ENCODE measurements at regions of chr3 and their contacts with region 1.

Region 1: GRCh38 chr3:187955076-187955952 is 198.6 kb upstream of the LPP start:
- DNase-seq: peak in 2 of 3 donors; percentile 64 to 75
- ATAC-seq: peak; percentile 62 to 75 (median 69)
- H3K4me3 ChIP-seq: no peak overlapping the region
- H3K27ac ChIP-seq: peak overlapping the region; percentile 30 to 70 (median 67)
- H3K4me1 ChIP-seq: peaks cover 0 to 56% (median 25%) of the 10 kb centered on the region in 4 donors
- H3K27me3 ChIP-seq: no peaks in the 10 kb centered on the region
- CTCF ChIP-seq: no peak
- POLR2A ChIP-seq: no peak

Region 2: DNA sequence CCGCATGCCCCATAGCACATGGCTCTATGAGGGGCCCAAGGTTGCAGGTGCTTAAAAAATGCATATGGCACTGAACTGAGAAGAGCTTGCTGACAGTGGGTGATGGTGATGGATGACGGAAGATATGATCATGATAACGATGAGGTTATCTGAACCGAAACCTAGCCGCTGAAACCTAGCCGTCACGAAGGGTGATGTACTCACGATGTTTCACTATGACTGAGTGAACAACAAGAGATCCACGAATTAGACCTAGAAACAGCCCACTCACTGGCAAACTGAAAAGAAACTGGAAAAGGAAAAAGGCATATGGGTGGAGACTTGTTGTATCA is 152.4 kb before region 1 on chr3:
- intact Hi-C with region 1: loop called in 1 of 2 experiments (anchors 10 kb)
- DNase-seq: no peak
- ATAC-seq: no peak
- H3K4me3 ChIP-seq: no peak overlapping the region
- H3K27ac ChIP-seq: no peak overlapping the region
- H3K4me1 ChIP-seq: peaks cover 0 to 13% (median 2%) of the 10 kb centered on the region in 4 donors
- H3K27me3 ChIP-seq: no peaks in the 10 kb centered on the region
- CTCF ChIP-seq: no peak
- POLR2A ChIP-seq: no peak

Region 3: GRCh38 chr3:188061133-188061532 is 105.8 kb after region 1 on chr3:
- intact Hi-C with region 1: no loop called
- DNase-seq: no peak
- ATAC-seq: peak; percentile 41 to 77 (median 63)
- H3K4me3 ChIP-seq: no peak overlapping the region
- H3K27ac ChIP-seq: no peak overlapping the region
- H3K4me1 ChIP-seq: peaks cover 0 to 11% (median 5%) of the 10 kb centered on the region in 4 donors
- H3K27me3 ChIP-seq: no peaks in the 10 kb centered on the region
- CTCF ChIP-seq: peak in 1 of 4 donors; percentile 5
- POLR2A ChIP-seq: no peak